MCF 10A (cell line): ENCODE measurements at regions of chr18 and their contacts with region 1.

Region 1: GRCh38 chr18:32470713-32471633 is at the start of gene GAREM1:
- DNase-seq: peak; percentile 99
- H3K4me3 Mint-ChIP-seq: peak within 1 kb of the TSS; percentile 77
- H3K27ac Mint-ChIP-seq: peak within 1 kb of the TSS; percentile 35
- H3K4me1 Mint-ChIP-seq: peaks cover 22% of the 10 kb centered on the region
- H3K27me3 Mint-ChIP-seq: no peaks in the 10 kb centered on the region
- CTCF ChIP-seq: peak; percentile 81
- total RNA-seq, gene GAREM1: 21.4 and 24.0 TPM in 2 replicates

Region 2: DNA sequence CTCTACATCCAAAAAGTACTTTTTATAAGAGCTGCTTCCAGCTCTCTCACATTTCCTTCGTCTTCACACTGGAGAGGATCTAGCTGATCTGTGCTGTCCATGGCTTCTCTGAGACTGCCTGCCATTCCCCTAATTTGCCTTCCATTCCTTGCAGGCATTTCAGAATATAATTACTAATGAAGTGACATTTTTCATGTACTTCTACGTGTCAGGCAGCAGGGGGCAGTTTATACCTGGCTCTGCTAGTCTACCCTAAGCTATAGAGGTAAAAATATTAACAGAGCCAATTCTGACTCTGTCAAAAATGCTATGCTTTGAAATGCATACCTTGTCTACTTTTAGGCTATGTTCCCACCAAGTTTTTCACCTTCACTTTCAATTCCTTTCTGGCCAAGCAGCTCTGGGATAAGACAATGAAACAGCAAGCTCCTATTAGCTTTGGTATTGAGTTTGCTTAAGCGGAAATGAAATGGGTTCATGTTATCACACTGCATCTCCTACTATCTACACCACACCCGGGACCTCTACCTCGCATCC is 199.2 kb before region 1 on chr18:
- CTCF ChIA-PET with region 1: interaction called, 193 read pairs
- POLR2A ChIA-PET with region 1: interaction called, 40 read pairs
- intact Hi-C with region 1: loop called (anchors 1 kb)
- DNase-seq: peak; percentile 57
- H3K4me3 Mint-ChIP-seq: no peak overlapping the region
- H3K27ac Mint-ChIP-seq: no peak overlapping the region
- H3K4me1 Mint-ChIP-seq: peaks cover 12% of the 10 kb centered on the region
- H3K27me3 Mint-ChIP-seq: no peaks in the 10 kb centered on the region
- CTCF ChIP-seq: peak; percentile 76

Region 3: GRCh38 chr18:32301976-32302743 is 168.8 kb before region 1 on chr18:
- CTCF ChIA-PET with region 1: interaction called, 21 read pairs
- POLR2A ChIA-PET with region 1: interaction called, 23 read pairs
- intact Hi-C with region 1: no loop called
- DNase-seq: peak; percentile 77
- H3K4me3 Mint-ChIP-seq: no peak overlapping the region
- H3K27ac Mint-ChIP-seq: peak overlapping the region; percentile 78
- H3K4me1 Mint-ChIP-seq: peaks cover 32% of the 10 kb centered on the region
- H3K27me3 Mint-ChIP-seq: no peaks in the 10 kb centered on the region
- CTCF ChIP-seq: no peak

Region 4: GRCh38 chr18:32335228-32335627 is 135.7 kb before region 1 on chr18:
- CTCF ChIA-PET with region 1: interaction called, 15 read pairs
- POLR2A ChIA-PET with region 1: interaction called, 3 read pairs
- intact Hi-C with region 1: no loop called
- DNase-seq: no peak
- H3K4me3 Mint-ChIP-seq: no peak overlapping the region
- H3K27ac Mint-ChIP-seq: no peak overlapping the region
- H3K4me1 Mint-ChIP-seq: no peaks in the 10 kb centered on the region
- H3K27me3 Mint-ChIP-seq: no peaks in the 10 kb centered on the region
- CTCF ChIP-seq: no peak

Region 5: DNA sequence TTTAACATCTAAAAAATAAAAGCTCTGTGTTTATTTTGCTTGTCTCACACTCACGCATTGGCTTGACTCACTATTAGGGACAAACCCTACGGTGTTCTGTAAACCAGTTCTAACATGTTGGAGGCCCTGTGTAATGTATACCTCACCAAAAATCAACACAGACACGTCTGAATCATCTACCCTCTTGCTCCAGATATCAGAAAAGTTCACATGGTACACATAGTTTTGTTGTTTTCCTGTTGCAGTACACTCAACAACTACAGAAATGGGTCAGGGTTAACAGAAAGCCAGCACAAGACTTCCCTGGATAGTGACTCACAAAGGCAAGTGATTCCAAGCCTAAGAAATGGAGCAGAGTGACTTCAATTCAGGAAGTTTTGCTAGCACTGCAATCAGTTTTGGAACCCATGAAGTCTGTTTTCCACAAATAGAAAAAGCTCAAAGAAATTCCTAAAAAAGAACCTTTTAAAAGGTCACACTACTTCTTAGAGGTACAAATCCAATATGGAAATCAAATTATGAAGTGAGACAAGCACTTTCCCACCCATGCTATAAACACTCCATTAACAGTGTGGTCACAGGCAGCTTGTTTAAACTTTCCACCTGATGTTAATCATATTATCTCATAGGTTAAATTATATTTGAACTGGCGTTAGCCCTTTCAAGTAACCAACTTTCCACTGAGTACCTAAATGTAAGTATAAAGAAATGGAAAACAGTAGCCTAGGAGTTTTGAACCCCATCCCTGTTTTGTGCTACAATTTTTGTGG is 87.7 kb before region 1 on chr18:
- CTCF ChIA-PET with region 1: interaction called, 74 read pairs
- POLR2A ChIA-PET with region 1: interaction called, 171 read pairs
- intact Hi-C with region 1: loop called (anchors 1 kb)
- DNase-seq: peak; percentile 97
- H3K4me3 Mint-ChIP-seq: peak overlapping the region; percentile 40
- H3K27ac Mint-ChIP-seq: peak overlapping the region; percentile 98
- H3K4me1 Mint-ChIP-seq: peaks cover 69% of the 10 kb centered on the region
- H3K27me3 Mint-ChIP-seq: no peaks in the 10 kb centered on the region
- CTCF ChIP-seq: no peak

Region 6: GRCh38 chr18:32454593-32454992 is 16.4 kb before region 1 on chr18:
- CTCF ChIA-PET with region 1: interaction called, 8 read pairs
- POLR2A ChIA-PET with region 1: interaction called, 27 read pairs
- intact Hi-C with region 1: no loop called
- DNase-seq: peak; percentile 30
- H3K4me3 Mint-ChIP-seq: no peak overlapping the region
- H3K27ac Mint-ChIP-seq: peak overlapping the region; percentile 85
- H3K4me1 Mint-ChIP-seq: peaks cover 43% of the 10 kb centered on the region
- H3K27me3 Mint-ChIP-seq: no peaks in the 10 kb centered on the region
- CTCF ChIP-seq: no peak